Activated CD4-positive, alpha-beta T cell treated with anti-CD3 and anti-CD28 coated beads for 36 hours (primary cell): ENCODE measurements at regions of chr12 and their contacts with region 1.

Region 1: GRCh38 chr12:3777206-3777809 is 24.4 kb upstream of the CRACR2A start:
- DNase-seq: peak; percentile 13
- ATAC-seq: peak; percentile 61
- H3K4me3 Mint-ChIP-seq: no peak overlapping the region
- H3K27ac Mint-ChIP-seq: no peak overlapping the region
- H3K4me1 Mint-ChIP-seq: peaks cover 4% of the 10 kb centered on the region
- H3K27me3 Mint-ChIP-seq: no peaks in the 10 kb centered on the region

Region 2: DNA sequence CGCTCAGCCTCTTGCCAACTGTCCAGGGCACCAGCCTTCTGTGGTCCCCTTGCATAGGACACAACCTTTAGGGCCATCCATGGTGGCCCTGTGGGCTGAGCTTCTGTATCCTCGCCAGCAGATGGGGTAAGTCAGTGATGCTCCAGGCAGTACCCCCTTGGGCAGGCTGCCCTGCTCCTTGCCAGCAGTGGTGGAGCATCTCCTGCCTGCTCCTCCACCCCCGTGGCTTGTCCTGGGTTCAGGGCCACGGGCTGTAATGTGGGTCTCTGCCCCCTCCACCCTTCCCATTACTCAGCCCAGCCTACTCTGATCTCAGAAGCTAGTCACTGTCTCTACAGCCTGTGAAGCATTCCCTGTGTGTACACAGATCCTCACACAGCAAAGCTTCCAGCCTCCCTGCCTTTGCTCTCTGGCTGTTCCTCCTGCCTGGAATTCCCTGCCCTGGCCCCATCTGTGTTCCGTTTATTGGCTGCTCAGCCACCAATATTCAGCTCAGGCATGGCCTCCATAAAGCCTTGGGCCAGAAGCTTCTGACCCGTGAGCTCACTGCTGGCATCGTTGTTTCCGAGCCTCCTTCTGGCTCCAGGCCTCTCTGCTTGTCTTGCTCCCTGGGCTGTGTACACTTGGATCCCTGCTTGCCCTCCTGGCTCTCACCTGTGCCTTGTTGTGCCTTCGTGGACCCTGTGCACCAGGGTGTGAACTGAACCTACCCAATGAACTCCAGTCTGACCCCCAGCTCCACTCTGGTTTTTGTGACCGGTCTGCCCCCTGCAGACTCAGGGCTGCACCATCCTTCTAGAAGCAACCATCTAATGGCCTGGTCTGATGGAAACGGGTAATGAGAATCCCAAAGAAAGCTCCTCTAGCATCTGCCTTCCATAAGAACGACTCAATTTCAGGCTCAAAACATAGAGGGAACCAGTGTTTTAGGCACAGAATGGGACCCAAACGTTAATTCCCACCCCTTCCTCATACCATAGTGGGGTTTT is 463.3 kb before region 1 on chr12:
- CTCF ChIA-PET with region 1: interaction called, 6 read pairs
- POLR2A ChIA-PET with region 1: no interaction called
- intact Hi-C with region 1: loop called in 1 of 2 experiments (anchors 1 kb)
- DNase-seq: peak; percentile 44
- ATAC-seq: peak; percentile 78
- H3K4me3 Mint-ChIP-seq: no peak overlapping the region
- H3K27ac Mint-ChIP-seq: no peak overlapping the region
- H3K4me1 Mint-ChIP-seq: no peaks in the 10 kb centered on the region
- H3K27me3 Mint-ChIP-seq: peaks cover 12% of the 10 kb centered on the region

Region 3: DNA sequence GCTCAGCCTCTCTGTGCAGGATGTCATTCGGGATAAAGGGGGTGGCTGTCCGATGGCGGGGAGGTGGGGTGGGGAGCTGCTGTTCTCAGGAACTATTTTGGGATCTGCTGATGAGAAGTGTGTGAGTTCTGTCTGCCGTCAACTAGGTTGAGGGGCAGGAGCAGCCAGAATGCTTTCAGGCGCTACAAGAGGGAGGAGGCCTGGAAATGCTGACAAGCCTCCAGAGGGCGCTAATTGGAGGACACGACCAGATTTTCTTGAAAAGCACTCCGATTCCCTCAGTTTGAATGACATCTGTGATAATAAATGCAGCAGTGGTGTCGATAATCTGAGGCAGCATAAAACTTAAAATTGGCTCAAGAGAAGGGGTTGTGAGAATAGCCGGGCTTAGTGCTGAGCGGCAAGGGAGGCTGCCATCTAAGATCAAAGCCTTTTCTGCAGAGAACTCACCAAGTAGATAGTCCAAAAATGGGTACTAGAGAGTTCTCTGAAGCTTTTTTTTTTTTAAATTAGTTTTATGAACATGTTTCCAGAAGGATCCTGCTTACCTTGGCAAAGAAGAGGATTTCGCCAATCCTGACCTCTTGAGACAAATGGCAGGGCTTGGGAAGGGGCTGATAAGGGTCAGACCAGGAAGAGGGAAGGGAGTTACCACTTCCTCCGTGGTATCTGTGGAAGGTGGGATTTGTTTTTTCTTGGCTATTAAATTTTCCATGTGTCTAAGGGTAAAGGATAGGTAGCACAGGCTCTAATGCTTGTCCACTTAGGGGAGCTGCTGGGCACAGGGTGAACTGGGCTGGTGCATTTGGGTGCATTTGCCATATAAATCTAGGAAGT is 118.8 kb before region 1 on chr12:
- CTCF ChIA-PET with region 1: interaction called, 5 read pairs
- POLR2A ChIA-PET with region 1: no interaction called
- intact Hi-C with region 1: loop called (anchors 1 kb)
- DNase-seq: peak; percentile 63
- ATAC-seq: no peak
- H3K4me3 Mint-ChIP-seq: no peak overlapping the region
- H3K27ac Mint-ChIP-seq: no peak overlapping the region
- H3K4me1 Mint-ChIP-seq: no peaks in the 10 kb centered on the region
- H3K27me3 Mint-ChIP-seq: no peaks in the 10 kb centered on the region

Region 4: GRCh38 chr12:3896801-3897331 is 119.6 kb after region 1 on chr12:
- CTCF ChIA-PET with region 1: no interaction called
- POLR2A ChIA-PET with region 1: no interaction called
- intact Hi-C with region 1: no loop called
- DNase-seq: no peak
- ATAC-seq: peak; percentile 24
- H3K4me3 Mint-ChIP-seq: peak overlapping the region; percentile 13
- H3K27ac Mint-ChIP-seq: peak overlapping the region; percentile 81
- H3K4me1 Mint-ChIP-seq: peaks cover 45% of the 10 kb centered on the region
- H3K27me3 Mint-ChIP-seq: no peaks in the 10 kb centered on the region